ENCODE measurements at regions of chr17 and their contacts with region 1.

Region 1: GRCh38 chr17:33602981-33603380 is 309.9 kb upstream of the ASIC2 start:
- DNase-seq: no peak
- H3K4me3 ChIP-seq: no peak overlapping the region
- H3K27ac ChIP-seq: no peak overlapping the region
- H3K4me1 ChIP-seq: no peaks in the 10 kb centered on the region
- H3K27me3 ChIP-seq: peaks cover 2% of the 10 kb centered on the region
- CTCF ChIP-seq: no peak

Region 2: GRCh38 chr17:33416131-33416530 is 186.8 kb before region 1 on chr17:
- CTCF ChIA-PET with region 1: no interaction called
- dilution Hi-C with region 1: no loop called
- in situ Hi-C with region 1: no loop called
- intact Hi-C with region 1: no loop called
- DNase-seq: no peak
- H3K4me3 ChIP-seq: no peak overlapping the region
- H3K27ac ChIP-seq: no peak overlapping the region
- H3K4me1 ChIP-seq: no peaks in the 10 kb centered on the region
- H3K27me3 ChIP-seq: no peaks in the 10 kb centered on the region
- CTCF ChIP-seq: no peak

Region 3: GRCh38 chr17:33486135-33486885 is 116.7 kb before region 1 on chr17:
- CTCF ChIA-PET with region 1: no interaction called
- dilution Hi-C with region 1: no loop called
- in situ Hi-C with region 1: no loop called
- intact Hi-C with region 1: no loop called
- DNase-seq: no peak
- H3K4me3 ChIP-seq: no peak overlapping the region
- H3K27ac ChIP-seq: no peak overlapping the region
- H3K4me1 ChIP-seq: no peaks in the 10 kb centered on the region
- H3K27me3 ChIP-seq: no peaks in the 10 kb centered on the region
- CTCF ChIP-seq: no peak

Region 4: GRCh38 chr17:33545124-33545523 is 57.9 kb before region 1 on chr17:
- CTCF ChIA-PET with region 1: no interaction called
- dilution Hi-C with region 1: loop called (anchors 5 kb)
- in situ Hi-C with region 1: no loop called
- intact Hi-C with region 1: no loop called
- DNase-seq: no peak
- H3K4me3 ChIP-seq: no peak overlapping the region
- H3K27ac ChIP-seq: no peak overlapping the region
- H3K4me1 ChIP-seq: no peaks in the 10 kb centered on the region
- H3K27me3 ChIP-seq: no peaks in the 10 kb centered on the region
- CTCF ChIP-seq: no peak